ENCODE measurements at regions of chr3 and their contacts with region 1.

Region 1: DNA sequence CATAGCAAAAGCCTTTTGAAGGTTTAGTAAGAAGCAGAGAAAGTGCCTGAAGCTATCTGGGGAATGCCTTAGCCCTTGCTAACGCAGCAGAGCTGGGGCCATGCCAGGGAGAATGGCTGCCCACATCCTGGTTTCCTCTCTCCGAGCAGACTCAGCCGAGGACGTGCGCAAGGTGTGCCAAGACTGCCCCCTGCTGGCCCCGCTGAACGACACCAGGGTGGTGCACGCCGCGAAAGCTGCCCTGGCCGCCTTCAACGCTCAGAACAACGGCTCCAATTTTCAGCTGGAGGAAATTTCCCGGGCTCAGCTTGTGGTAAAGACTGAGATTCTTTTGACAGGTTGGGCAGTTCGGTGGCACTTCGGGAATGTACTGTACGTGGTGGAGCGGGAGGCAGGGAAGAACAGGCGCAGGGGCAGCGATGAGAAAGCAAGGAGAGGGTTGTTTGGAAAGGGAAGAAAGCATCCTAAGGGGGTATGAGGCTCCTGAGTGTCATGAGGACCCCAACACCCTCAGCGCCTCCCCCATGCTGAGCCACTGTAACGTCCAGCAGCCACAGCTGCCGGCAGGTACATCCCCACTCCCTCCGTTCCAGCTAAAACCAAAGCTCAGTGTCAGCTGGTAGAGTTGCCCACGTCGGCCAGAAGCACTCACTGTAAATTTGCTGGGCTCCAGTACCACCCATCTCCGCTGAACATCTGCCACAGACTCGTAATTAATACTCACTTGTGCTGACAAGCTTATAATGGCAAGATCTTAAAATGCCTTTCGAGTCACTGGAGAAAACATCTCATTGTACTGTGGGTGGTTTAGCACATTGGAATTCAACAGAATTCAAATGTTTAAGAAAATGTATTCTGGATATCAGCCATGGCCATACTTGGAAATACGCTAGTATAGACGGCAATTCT is 4.4 kb downstream of the AHSG start:
- DNase-seq: peak; percentile 95
- ATAC-seq: peak; percentile 96
- H3K4me3 Mint-ChIP-seq: peak overlapping the region; percentile 32
- H3K27ac Mint-ChIP-seq: peak overlapping the region; percentile 11
- H3K4me1 Mint-ChIP-seq: peaks cover 23% of the 10 kb centered on the region
- H3K27me3 Mint-ChIP-seq: peaks cover 26% of the 10 kb centered on the region

Region 2: GRCh38 chr3:185637388-185637787 is 979.9 kb before region 1 on chr3:
- CTCF ChIA-PET with region 1: no interaction called
- POLR2A ChIA-PET with region 1: no interaction called
- intact Hi-C with region 1: no loop called
- DNase-seq: no peak
- ATAC-seq: no peak
- H3K4me3 Mint-ChIP-seq: no peak overlapping the region
- H3K27ac Mint-ChIP-seq: no peak overlapping the region
- H3K4me1 Mint-ChIP-seq: peaks cover 12% of the 10 kb centered on the region
- H3K27me3 Mint-ChIP-seq: no peaks in the 10 kb centered on the region

Region 3: DNA sequence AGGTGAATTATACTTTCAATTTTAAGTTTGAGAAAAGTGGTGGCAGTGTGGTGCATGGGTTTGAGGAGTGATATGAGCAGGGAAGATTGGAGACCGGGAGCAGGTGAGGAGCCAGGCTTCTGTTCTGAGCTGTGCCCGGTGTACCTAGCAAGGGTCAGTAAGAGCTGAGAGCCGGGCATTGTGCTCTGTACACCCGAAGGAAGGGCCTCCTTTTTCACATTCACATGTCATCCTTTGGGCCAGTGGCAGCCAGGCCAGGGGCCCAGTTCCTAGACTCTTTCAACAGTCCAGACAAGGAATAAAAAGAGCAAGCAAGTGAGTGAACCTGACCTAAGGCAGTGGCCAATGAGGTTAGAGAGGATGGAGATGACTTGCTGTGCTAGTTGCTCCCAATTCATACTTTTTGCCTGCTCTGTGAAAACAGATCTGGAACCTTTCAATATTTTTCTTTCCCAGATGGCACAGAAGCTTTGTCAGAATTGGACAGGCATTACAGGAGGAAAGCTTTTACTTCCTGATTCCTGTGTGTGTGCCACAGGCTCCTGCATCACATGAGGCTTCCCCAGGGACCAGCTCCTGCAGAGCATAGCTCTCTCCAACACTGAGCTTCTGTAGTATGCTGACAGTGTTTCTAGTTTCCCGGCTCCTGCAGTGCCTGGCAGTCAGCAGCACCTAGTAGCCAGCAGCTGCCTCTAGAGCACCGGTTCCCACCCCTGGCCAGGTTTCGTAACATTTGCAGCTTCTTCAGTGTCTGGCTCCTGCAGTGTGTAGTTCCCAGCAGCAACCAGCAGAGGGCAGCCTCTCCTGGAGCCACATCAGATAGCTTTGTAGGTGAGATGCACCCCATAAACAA is 674.2 kb before region 1 on chr3:
- CTCF ChIA-PET with region 1: interaction called, 22 read pairs
- POLR2A ChIA-PET with region 1: no interaction called
- intact Hi-C with region 1: no loop called
- DNase-seq: peak; percentile 92
- ATAC-seq: peak; percentile 96
- H3K4me3 Mint-ChIP-seq: no peak overlapping the region
- H3K27ac Mint-ChIP-seq: no peak overlapping the region
- H3K4me1 Mint-ChIP-seq: peaks cover 22% of the 10 kb centered on the region
- H3K27me3 Mint-ChIP-seq: peaks cover 4% of the 10 kb centered on the region

Region 4: DNA sequence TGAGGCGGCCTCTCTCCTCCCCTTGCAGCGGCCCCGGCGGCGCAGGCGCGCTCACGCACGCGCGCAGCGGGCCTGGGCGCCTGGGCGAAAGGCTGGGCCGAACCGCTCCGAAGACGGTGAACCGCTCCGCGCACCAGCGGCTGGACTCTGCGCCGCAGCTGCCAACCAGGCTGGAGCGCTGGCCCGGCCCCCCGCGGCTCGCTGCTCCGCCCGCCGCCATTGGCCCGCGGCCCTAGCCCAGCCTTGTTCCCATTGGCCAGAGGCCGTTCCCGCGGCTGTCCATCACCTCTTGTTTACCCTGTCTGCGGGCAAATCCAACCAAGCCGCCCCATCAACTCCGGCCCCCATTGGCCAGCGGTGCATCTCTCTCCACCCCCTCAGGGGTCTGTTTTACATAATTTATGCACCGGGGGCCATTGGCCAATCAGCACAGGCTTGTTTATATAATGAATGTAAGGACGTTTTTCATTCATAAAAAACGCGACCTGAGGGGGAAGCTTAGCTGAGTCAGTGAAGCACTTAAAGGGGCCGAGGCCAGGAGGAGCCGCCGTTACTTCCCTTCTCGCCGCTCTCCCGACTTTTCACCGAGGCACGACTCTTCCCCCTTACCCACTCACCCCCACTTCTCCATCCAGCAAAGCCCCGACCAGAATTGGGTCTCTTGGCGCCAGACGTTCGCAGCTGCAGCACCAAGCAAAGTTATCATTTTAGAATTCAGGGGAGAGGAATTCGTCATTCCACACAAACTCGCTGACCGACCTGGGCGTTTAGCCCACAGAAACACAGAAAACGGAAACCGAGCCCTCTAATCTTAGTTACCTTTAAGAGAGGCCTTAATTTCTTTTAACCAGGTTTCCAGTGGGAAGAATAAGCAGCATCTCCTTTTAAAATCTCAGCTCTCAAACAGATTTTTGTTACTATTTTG is 508.1 kb before region 1 on chr3 and contains the start of gene ETV5:
- CTCF ChIA-PET with region 1: interaction called, 5 read pairs
- POLR2A ChIA-PET with region 1: no interaction called
- intact Hi-C with region 1: loop called in 1 of 2 experiments (anchors 5 kb)
- DNase-seq: peak; percentile 96
- ATAC-seq: peak; percentile 96
- H3K4me3 Mint-ChIP-seq: peak within 1 kb of the TSS; percentile 73
- H3K27ac Mint-ChIP-seq: peak within 1 kb of the TSS; percentile 42
- H3K4me1 Mint-ChIP-seq: peaks cover 34% of the 10 kb centered on the region
- H3K27me3 Mint-ChIP-seq: peaks cover 69% of the 10 kb centered on the region
- total RNA-seq, gene ETV5: 0.83 to 1.4 TPM

Region 5: GRCh38 chr3:186456731-186457191 is 160.5 kb before region 1 on chr3:
- CTCF ChIA-PET with region 1: no interaction called
- POLR2A ChIA-PET with region 1: no interaction called
- intact Hi-C with region 1: no loop called
- DNase-seq: no peak
- ATAC-seq: no peak
- H3K4me3 Mint-ChIP-seq: no peak overlapping the region
- H3K27ac Mint-ChIP-seq: no peak overlapping the region
- H3K4me1 Mint-ChIP-seq: peaks cover 6% of the 10 kb centered on the region
- H3K27me3 Mint-ChIP-seq: peaks cover 3% of the 10 kb centered on the region

Region 6: DNA sequence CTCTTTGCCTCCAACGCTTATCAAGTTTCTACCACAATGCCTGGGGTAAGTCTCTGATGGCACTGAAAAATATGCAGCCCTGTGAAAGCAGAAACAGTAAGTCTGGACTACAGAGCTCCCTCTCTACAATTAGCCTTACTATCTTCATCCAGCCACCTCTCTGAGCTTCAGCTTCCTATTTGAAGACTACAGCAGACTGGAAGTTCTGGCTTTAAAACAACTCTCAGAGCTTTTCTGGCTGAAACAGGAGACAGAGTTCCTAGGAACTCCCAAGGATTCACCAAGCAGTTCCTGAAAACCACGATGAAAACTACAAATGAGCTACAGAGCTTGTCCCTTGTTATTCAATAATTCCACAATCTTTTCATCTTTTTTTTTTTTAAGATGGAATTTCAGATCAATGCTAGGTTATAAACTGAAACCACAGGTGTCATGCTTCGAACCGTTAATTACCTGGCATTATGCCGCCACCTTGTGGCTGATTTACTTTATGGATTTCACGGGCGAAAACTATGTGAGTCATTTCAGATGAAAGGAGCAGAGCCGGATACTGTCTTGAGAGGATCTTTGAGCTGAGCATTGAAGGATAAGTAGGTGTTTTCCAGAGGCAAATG is 77.0 kb before region 1 on chr3:
- CTCF ChIA-PET with region 1: interaction called, 90 read pairs
- POLR2A ChIA-PET with region 1: no interaction called
- intact Hi-C with region 1: loop called in 1 of 2 experiments (anchors 2 kb)
- DNase-seq: peak; percentile 89
- ATAC-seq: peak; percentile 66
- H3K4me3 Mint-ChIP-seq: no peak overlapping the region
- H3K27ac Mint-ChIP-seq: peak overlapping the region; percentile 64
- H3K4me1 Mint-ChIP-seq: peaks cover 63% of the 10 kb centered on the region
- H3K27me3 Mint-ChIP-seq: no peaks in the 10 kb centered on the region

Region 7: DNA sequence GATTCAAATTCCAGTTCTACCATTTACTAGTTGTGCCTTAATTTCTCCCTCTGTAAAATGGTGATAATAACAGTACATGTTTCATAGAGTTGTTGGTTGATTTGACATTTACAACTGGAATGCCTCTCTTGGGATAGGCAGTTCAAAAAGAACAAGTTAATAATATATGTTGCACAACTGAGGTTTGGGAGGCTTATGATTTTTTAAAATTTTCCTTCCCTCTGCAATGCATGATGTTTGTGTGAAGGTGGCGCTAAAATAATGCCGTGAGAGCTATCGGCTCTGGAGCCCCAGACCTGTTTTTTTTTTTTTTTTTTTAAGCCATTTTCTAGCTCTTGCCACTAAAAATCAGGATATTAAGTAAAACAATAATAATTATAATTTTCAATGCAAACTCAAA is 28.2 kb before region 1 on chr3:
- CTCF ChIA-PET with region 1: interaction called, 42 read pairs
- POLR2A ChIA-PET with region 1: interaction called, 4 read pairs
- intact Hi-C with region 1: no loop called
- DNase-seq: no peak
- ATAC-seq: no peak
- H3K4me3 Mint-ChIP-seq: no peak overlapping the region
- H3K27ac Mint-ChIP-seq: no peak overlapping the region
- H3K4me1 Mint-ChIP-seq: peaks cover 21% of the 10 kb centered on the region
- H3K27me3 Mint-ChIP-seq: no peaks in the 10 kb centered on the region

Region 8: GRCh38 chr3:186783073-186783730 is 165.9 kb after region 1 on chr3 and contains the start of gene EIF4A2:
- CTCF ChIA-PET with region 1: interaction called, 5 read pairs
- POLR2A ChIA-PET with region 1: interaction called, 21 read pairs
- intact Hi-C with region 1: loop called (anchors 2 to 5 kb)
- DNase-seq: peak; percentile 95
- ATAC-seq: peak; percentile 69
- H3K4me3 Mint-ChIP-seq: peak within 1 kb of the TSS; percentile 100
- H3K27ac Mint-ChIP-seq: peak within 1 kb of the TSS; percentile 100
- H3K4me1 Mint-ChIP-seq: peaks cover 32% of the 10 kb centered on the region
- H3K27me3 Mint-ChIP-seq: no peaks in the 10 kb centered on the region
- total RNA-seq, gene EIF4A2: 291 to 390 TPM

Region 9: DNA sequence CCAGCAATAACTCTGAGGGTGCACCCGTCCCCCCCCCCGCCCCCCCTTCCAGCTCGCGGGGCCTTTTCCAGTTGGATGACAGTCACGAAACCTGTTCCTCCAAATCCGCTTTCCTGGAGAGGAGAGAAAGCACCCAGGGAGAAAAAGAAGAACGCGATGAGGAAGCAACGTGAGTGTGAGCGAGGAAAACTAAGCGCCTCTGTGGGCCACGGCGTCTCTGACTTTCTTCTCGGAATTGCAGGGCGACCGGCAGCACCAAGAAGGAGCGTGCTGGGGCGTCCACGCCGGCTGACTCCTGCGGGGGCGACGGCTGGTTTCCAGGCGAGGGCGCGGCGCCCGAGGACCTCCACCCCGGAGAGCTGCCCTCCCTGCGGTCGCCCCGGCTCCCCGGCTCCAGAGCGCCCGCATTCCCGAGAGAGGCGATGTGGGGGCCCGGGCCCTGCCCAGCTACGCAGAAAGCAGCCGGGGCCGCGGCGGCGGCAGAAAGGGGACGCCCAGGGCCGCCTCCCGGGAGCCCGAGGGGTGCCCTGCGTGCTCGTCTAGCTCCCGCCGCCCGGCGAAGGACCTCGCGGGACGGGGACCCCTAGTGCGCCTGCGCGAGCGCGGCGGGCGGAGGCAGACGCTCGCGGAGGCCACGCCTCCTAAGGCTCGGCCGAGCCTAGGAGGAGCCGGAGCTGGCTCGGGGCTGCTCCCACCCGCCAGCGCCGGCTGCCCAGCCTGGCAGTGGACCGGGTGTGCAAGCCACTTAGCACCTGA is 209.9 kb after region 1 on chr3:
- CTCF ChIA-PET with region 1: interaction called, 30 read pairs
- POLR2A ChIA-PET with region 1: interaction called, 3 read pairs
- intact Hi-C with region 1: loop called in 1 of 2 experiments (anchors 1 kb)
- DNase-seq: peak; percentile 91
- ATAC-seq: peak; percentile 83
- H3K4me3 Mint-ChIP-seq: peak overlapping the region; percentile 82
- H3K27ac Mint-ChIP-seq: no peak overlapping the region
- H3K4me1 Mint-ChIP-seq: peaks cover 23% of the 10 kb centered on the region
- H3K27me3 Mint-ChIP-seq: peaks cover 31% of the 10 kb centered on the region

Region 10: GRCh38 chr3:187082758-187083375 is 465.6 kb after region 1 on chr3:
- CTCF ChIA-PET with region 1: no interaction called
- POLR2A ChIA-PET with region 1: no interaction called
- intact Hi-C with region 1: no loop called
- DNase-seq: no peak
- ATAC-seq: no peak
- H3K4me3 Mint-ChIP-seq: no peak overlapping the region
- H3K27ac Mint-ChIP-seq: no peak overlapping the region
- H3K4me1 Mint-ChIP-seq: peaks cover 9% of the 10 kb centered on the region
- H3K27me3 Mint-ChIP-seq: no peaks in the 10 kb centered on the region